Heart left ventricle (tissue), 16 donors: ENCODE measurements at regions of chr16 and their contacts with region 1.

Region 1: GRCh38 chr16:85010931-85011845 is at the start of gene ZDHHC7:
- DNase-seq: peak; percentile 91 to 95 (median 92)
- ATAC-seq: peak; percentile 90 to 97 (median 96)
- H3K4me3 ChIP-seq: peak within 1 kb of the TSS; percentile 75 to 99 (median 90)
- H3K27ac ChIP-seq: peak within 1 kb of the TSS; percentile 90 to 99 (median 96)
- H3K4me1 ChIP-seq: peaks cover 6 to 69% (median 29%) of the 10 kb centered on the region in 12 donors
- H3K27me3 ChIP-seq: no peaks in the 10 kb centered on the region
- CTCF ChIP-seq: peak in 3 of 12 donors; percentile 15 to 27 (median 27)
- POLR2A ChIP-seq: peak; percentile 43 to 87
- total RNA-seq, gene ZDHHC7: 32.9 to 66.7 (median 44.7) TPM

Region 2: GRCh38 chr16:85027349-85027957 is 16.3 kb after region 1 on chr16 and contains the start of gene KIAA0513:
- intact Hi-C with region 1: loop called in 2 of 10 experiments (anchors 1 kb)
- DNase-seq: peak; percentile 94 to 98 (median 95)
- ATAC-seq: peak; percentile 68 to 91 (median 88)
- H3K4me3 ChIP-seq: peak within 1 kb of the TSS; percentile 55 to 98 (median 80)
- H3K27ac ChIP-seq: peak within 1 kb of the TSS; percentile 24 to 92 (median 79)
- H3K4me1 ChIP-seq: peaks cover 3 to 49% (median 15%) of the 10 kb centered on the region in 12 donors
- H3K27me3 ChIP-seq: no peaks in the 10 kb centered on the region
- CTCF ChIP-seq: peak in 7 of 12 donors; percentile 30 to 55 (median 37)
- POLR2A ChIP-seq: peak in 1 of 2 donors; percentile 98
- total RNA-seq, gene KIAA0513: 4.8 to 14.0 (median 10.0) TPM

Region 3: DNA sequence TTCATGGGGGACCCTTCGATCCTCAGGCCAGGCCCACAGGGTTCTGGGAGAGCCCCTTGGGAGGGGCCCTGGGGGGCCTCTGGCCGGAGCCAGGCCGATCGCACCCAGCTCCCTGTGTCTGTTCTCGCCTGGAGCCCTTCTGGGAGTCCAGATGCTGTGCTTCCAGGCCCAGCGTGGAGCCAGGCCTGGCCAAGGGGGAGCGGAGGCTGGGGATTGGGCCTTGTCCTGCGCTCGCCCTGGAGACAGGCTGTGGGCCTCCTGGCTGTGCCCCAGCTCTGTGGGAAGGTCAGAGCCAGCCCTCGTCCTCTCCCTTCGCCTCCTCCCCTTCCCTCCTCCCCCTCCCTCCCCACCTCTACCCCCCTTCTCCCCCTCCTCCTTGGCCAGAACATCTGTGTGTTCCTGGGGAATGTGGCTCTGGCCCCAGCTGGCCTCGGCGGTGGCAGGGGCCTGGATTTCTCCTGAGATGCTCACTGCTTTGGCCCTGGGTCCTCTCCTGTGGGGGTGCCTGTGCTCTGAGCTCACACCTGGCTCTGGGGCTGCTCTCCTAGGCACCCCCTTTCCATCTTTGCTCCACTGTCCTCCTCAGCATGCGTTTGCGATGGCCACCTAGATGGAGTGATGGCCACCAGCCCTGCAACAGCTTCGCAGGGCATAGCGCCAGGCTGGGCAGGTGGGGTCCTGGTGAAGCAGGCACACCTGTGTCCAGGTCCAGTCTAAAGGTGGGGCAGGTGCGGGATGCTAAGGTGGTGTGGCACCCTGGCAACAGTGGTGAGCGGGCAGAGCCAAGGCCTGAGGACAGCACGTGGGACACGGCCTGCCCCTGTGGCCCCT is 191.7 kb after region 1 on chr16:
- intact Hi-C with region 1: no loop called
- DNase-seq: peak; percentile 84 to 92 (median 91)
- ATAC-seq: peak; percentile 81 to 91 (median 88)
- H3K4me3 ChIP-seq: no peak overlapping the region
- H3K27ac ChIP-seq: peak overlapping the region; percentile 32 to 95 (median 86)
- H3K4me1 ChIP-seq: peaks cover 14 to 70% (median 42%) of the 10 kb centered on the region in 12 donors
- H3K27me3 ChIP-seq: no peaks in the 10 kb centered on the region
- CTCF ChIP-seq: no peak
- POLR2A ChIP-seq: no peak